PC-9 (cell line): ENCODE measurements at regions of chr5 and their contacts with region 1.

Region 1: GRCh38 chr5:132479111-132479951 is 11.2 kb downstream of the IRF1 start:
- DNase-seq: no peak
- H3K4me3 ChIP-seq: no peak overlapping the region
- H3K27ac ChIP-seq: no peak overlapping the region
- H3K4me1 ChIP-seq: no peaks in the 10 kb centered on the region
- H3K27me3 ChIP-seq: no peaks in the 10 kb centered on the region
- CTCF ChIP-seq: no peak

Region 2: DNA sequence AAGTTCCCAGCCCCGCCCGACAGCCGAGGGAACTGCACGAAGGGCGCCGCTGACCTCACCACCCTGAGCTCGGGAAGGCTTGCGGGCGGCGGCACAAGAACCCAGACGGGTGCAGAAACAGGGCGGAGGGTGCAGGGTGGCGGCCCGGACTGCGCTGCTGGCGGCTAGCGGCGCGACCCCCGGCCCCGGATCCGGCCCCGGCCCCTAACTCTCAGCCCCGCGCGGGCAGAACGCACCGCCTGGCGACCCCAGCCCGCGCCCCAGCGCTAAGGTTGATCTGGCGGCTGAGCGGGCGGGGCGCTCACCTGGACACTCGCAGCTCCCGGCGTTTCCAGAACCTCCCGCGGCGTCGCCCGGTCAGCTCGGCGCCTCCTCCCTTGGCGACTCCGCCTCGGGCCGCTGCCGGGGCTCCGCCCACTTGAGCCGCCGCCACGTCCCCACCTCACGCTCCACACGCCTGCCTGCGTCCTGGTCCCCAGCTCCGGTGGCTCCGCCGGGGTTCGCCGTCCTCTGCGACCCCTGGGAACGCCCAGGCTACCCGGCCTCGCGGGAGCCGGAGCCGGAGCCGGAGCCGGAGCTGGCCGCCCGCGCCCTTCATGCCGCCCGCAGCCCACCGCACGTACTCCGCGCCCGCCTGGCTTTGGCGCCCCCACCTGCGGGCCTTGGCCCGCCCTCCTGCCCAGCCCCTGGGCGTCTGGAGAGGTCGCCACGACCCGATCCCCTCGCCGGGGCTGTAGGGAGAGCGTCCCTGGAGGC is 251.7 kb before region 1 on chr5 and contains the start of gene P4HA2:
- CTCF ChIA-PET with region 1: interaction called, 10 read pairs
- POLR2A ChIA-PET with region 1: no interaction called
- intact Hi-C with region 1: no loop called
- DNase-seq: peak; percentile 65 to 85
- H3K4me3 ChIP-seq: peak within 1 kb of the TSS; percentile 78
- H3K27ac ChIP-seq: no peak within 1 kb of the TSS
- H3K4me1 ChIP-seq: peaks cover 12% of the 10 kb centered on the region
- H3K27me3 ChIP-seq: no peaks in the 10 kb centered on the region
- CTCF ChIP-seq: no peak; the same call in 1 of the 2 replicates
- total RNA-seq, gene P4HA2: 21.7 and 24.0 TPM in 2 replicates